ENCODE measurements at regions of chr4 and their contacts with region 1.

Region 1: GRCh38 chr4:142846729-142847596 is 862 bp upstream of the INPP4B start:
- DNase-seq: no peak
- H3K4me3 ChIP-seq: peak overlapping the region; percentile 54 to 70
- H3K27ac ChIP-seq: peak overlapping the region; percentile 73
- H3K4me1 ChIP-seq: peaks cover 5% of the 10 kb centered on the region
- H3K27me3 ChIP-seq: no peaks in the 10 kb centered on the region
- CTCF ChIP-seq: peak in 2 of 3 experiments; percentile 36 to 39
- POLR2A ChIP-seq: no peak

Region 2: DNA sequence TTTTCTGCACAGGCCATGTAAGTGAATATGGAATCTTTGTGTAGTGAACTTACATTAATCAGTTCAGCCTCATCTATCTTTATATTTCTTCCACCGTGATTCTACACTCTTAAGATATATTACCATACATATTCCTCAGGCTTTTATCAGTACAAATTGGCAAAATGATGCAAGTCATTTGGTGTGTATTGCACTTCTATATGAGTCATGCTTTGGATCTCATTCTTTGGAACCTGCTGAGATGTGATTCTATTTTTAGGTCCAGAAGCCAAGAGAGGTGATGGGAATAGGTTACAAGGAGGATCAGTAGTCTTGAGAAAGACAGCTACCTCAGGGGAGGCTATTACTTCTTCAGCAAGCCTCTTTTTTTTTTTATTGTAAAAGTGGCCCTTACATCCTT is 1421.8 kb before region 1 on chr4:
- intact Hi-C with region 1: loop called (anchors 10 kb)
- DNase-seq: no peak
- H3K4me3 ChIP-seq: no peak overlapping the region
- H3K27ac ChIP-seq: no peak overlapping the region
- H3K4me1 ChIP-seq: no peaks in the 10 kb centered on the region
- H3K27me3 ChIP-seq: no peaks in the 10 kb centered on the region
- CTCF ChIP-seq: no peak
- POLR2A ChIP-seq: no peak

Region 3: GRCh38 chr4:142126890-142127497 is 720.0 kb before region 1 on chr4:
- intact Hi-C with region 1: loop called (anchors 10 kb)
- DNase-seq: no peak
- H3K4me3 ChIP-seq: no peak overlapping the region
- H3K27ac ChIP-seq: no peak overlapping the region
- H3K4me1 ChIP-seq: peaks cover 18% of the 10 kb centered on the region
- H3K27me3 ChIP-seq: no peaks in the 10 kb centered on the region
- CTCF ChIP-seq: peak; percentile 46 to 82 (median 58)
- POLR2A ChIP-seq: no peak